Endothelial cell of umbilical vein (primary cell): ENCODE measurements at regions of chr15 and their contacts with region 1.

Region 1: GRCh38 chr15:77496710-77497103 is 76.0 kb downstream of the HMG20A start:
- DNase-seq: peak; percentile 82
- H3K4me3 ChIP-seq: no peak overlapping the region
- H3K27ac ChIP-seq: peak overlapping the region; percentile 94
- H3K4me1 ChIP-seq: peaks cover 53% of the 10 kb centered on the region
- H3K27me3 ChIP-seq: no peaks in the 10 kb centered on the region
- CTCF ChIP-seq: peak; percentile 94 to 97
- POLR2A ChIP-seq: no peak

Region 2: GRCh38 chr15:76973362-76973743 is 523.4 kb before region 1 on chr15:
- CTCF ChIA-PET with region 1: interaction called, 8 read pairs
- POLR2A ChIA-PET with region 1: no interaction called
- dilution Hi-C with region 1: no loop called
- intact Hi-C with region 1: loop called (anchors 1 kb)
- DNase-seq: peak; percentile 56
- H3K4me3 ChIP-seq: no peak overlapping the region
- H3K27ac ChIP-seq: no peak overlapping the region
- H3K4me1 ChIP-seq: peaks cover 11% of the 10 kb centered on the region
- H3K27me3 ChIP-seq: peaks cover 0 to 2% of the 10 kb centered on the region in 2 experiments
- CTCF ChIP-seq: peak; percentile 78
- POLR2A ChIP-seq: no peak

Region 3: DNA sequence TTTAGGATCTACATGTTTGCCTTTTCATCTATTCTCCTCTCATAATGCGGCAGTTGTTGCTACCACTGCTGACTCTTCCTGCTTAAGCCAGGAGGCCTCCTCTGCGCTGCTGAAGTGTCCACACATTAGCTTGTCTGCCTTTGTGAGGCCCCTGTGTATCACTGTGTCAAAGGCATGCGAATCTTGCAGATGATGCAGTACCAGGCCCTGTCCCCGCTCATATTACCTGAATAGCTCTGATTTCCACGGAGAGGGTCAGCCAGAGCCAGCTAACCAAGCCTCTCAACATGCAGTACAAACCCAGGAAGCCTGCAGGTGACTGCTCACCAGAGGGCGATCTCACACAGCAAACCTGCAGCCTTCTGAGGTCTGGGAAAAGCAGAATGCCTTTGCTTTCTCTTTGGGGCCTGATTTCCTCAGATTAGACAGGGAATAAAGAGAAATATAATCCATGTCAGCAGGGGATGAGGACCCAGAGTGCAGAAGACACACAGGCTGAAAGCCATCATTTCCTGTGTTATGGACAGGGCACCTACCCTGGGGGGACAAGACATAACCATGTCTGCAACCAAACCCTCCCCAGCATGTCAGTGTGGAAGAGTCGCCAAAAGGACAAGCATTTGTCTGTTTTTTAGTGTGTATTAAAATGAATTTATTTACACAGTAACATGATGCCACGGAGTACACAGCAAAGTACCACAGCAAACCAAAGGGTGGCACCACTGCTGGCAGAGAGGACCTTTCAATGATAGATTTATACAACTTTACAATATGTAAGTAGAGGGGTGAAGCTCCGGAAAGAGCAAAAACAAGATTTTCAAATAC is 389.0 kb before region 1 on chr15:
- CTCF ChIA-PET with region 1: interaction called, 11 read pairs
- POLR2A ChIA-PET with region 1: no interaction called
- dilution Hi-C with region 1: no loop called
- intact Hi-C with region 1: loop called (anchors 1 kb)
- DNase-seq: peak; percentile 53
- H3K4me3 ChIP-seq: no peak overlapping the region
- H3K27ac ChIP-seq: no peak overlapping the region
- H3K4me1 ChIP-seq: peaks cover 3% of the 10 kb centered on the region
- H3K27me3 ChIP-seq: no peaks in the 10 kb centered on the region
- CTCF ChIP-seq: peak; percentile 61 to 78
- POLR2A ChIP-seq: no peak

Region 4: DNA sequence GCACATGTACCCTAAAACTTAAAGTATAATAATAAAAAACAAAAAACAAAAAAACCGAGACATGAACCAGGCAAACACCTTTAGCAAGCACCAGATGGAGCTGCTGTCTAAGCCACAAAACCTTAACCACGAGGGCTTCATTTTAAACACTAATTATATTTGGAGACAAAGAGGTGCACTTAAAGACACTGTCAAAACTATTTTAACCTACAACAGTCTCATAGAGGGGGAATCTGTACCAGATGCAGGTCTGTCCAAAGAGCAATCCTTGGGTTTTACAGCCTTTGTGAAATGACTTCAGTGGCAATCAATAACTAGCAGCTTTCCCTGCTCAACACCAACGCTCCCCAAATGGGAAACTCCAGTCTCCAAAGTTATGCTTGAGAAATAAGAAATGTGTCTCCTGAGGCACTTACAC is 310.1 kb before region 1 on chr15:
- CTCF ChIA-PET with region 1: interaction called, 96 read pairs
- POLR2A ChIA-PET with region 1: no interaction called
- dilution Hi-C with region 1: no loop called
- intact Hi-C with region 1: loop called (anchors 1 kb)
- DNase-seq: peak; percentile 66
- H3K4me3 ChIP-seq: no peak overlapping the region
- H3K27ac ChIP-seq: peak overlapping the region; percentile 92
- H3K4me1 ChIP-seq: peaks cover 33% of the 10 kb centered on the region
- H3K27me3 ChIP-seq: no peaks in the 10 kb centered on the region
- CTCF ChIP-seq: peak; percentile 30 to 56
- POLR2A ChIP-seq: no peak

Region 5: DNA sequence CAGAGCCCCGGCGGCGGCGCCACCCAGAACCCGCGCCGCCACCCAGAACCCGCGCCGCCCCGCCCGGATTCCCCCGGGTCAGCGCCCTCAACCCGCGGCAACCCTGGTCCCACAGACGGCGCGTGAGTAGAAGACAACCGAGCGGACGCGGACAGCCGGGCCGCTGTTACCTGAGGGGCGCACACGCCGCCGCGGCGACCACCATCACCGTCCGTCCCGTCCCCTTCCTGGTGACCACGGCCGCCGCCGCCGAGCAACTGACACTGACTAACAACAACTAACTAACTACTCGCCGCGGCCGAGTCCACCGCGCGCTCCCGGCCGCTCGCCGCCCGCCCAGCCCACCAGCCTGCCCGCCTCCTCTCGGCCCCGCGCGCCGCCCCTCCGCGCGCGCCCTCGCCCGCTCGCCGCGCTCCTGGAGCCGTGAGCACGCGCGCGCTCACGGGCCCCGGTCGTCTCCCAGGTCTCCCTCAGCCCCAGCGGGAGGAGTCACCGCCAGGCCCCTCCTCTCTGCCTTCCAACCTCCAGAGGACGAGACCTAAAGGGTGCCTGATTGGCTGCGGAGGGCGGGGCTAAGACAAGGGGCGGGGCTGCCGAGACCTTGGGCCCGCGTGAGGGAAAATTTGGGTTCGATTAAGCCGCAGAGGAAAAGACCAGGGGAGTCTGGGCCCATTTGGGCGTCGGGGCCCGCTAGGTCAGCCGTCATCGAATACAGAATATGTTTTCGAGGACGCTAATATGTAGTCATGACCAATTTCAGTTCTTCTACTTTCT is 76.7 kb before region 1 on chr15 and contains the start of gene PEAK1:
- CTCF ChIA-PET with region 1: interaction called, 34 read pairs
- POLR2A ChIA-PET with region 1: interaction called, 4 read pairs
- dilution Hi-C with region 1: no loop called
- intact Hi-C with region 1: loop called (anchors 1 kb)
- DNase-seq: peak; percentile 98
- H3K4me3 ChIP-seq: peak within 1 kb of the TSS; percentile 79 to 99 (median 95)
- H3K27ac ChIP-seq: peak within 1 kb of the TSS; percentile 95
- H3K4me1 ChIP-seq: peaks cover 43% of the 10 kb centered on the region
- H3K27me3 ChIP-seq: no peaks in the 10 kb centered on the region
- CTCF ChIP-seq: no peak
- POLR2A ChIP-seq: peak; percentile 84
- total RNA-seq, gene PEAK1: 79.2 and 91.9 TPM in 2 replicates

Region 6: GRCh38 chr15:77482570-77482969 is 14.1 kb before region 1 on chr15:
- CTCF ChIA-PET with region 1: interaction called, 58 read pairs
- POLR2A ChIA-PET with region 1: interaction called, 3 read pairs
- dilution Hi-C with region 1: no loop called
- intact Hi-C with region 1: loop called (anchors 1 kb)
- DNase-seq: peak; percentile 87
- H3K4me3 ChIP-seq: no peak overlapping the region
- H3K27ac ChIP-seq: peak overlapping the region; percentile 76
- H3K4me1 ChIP-seq: peaks cover 67% of the 10 kb centered on the region
- H3K27me3 ChIP-seq: no peaks in the 10 kb centered on the region
- CTCF ChIP-seq: no peak
- POLR2A ChIP-seq: no peak